SK-N-SH (cell line): ENCODE measurements at regions of chr11 and their contacts with region 1.

Region 1: GRCh38 chr11:117443266-117444195 is 115.9 kb downstream of the CEP164 start:
- DNase-seq: peak; percentile 92
- H3K4me3 ChIP-seq: peak overlapping the region; percentile 8 to 9; a peak in 2 of 4 replicates
- H3K27ac ChIP-seq: peak overlapping the region in 1 of 2 experiments; percentile 99; a peak in 2 of 4 replicates
- H3K4me1 ChIP-seq: peaks cover 0 to 29% of the 10 kb centered on the region in 2 experiments; a peak in 2 of 4 replicates
- H3K27me3 ChIP-seq: peaks cover 22% of the 10 kb centered on the region; the same call in 1 of the 2 replicates
- CTCF ChIP-seq: peak; percentile 65
- EP300 ChIP-seq: peak in 1 of 2 experiments; percentile 31; a peak in 1 of 4 replicates
- RAD21 ChIP-seq: peak; percentile 96

Region 2: DNA sequence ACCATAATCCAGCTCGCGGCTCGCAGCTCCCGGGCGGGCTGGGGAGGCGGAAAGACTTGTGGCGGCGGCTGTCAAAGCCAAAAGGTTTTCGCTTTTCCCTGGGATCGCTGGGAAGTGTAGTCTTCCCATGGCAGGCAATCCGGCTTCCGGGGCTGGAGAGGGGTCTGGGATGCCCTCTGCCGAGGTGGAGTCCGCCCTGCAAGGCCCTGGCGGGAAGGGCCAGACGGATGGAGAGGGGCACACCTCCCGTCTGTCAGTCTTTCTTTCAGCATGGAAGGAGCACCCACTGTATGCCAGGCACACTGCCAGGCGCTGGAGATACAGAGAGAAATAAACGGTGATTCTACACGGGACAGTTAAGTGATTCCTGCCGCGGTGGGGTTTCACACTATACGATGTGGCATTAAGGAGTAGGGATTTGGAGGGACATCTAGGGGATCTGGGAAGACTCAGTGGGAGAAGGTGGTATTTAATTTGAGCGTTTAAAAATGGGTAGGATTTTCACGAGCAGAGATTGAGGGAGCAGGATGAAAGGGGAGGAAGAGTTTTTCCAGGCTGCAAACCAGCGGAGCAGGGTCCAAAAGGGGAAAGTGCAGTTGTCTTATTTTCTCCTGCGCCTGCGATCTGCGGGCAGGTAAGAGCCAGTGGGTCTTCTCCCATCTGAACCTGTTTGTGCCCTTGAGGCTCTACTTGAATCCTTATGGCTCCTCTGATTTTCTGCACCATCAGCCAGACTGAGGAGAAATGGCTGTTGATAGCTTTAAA is 127.2 kb before region 1 on chr11 and contains the start of gene BACE1:
- CTCF ChIA-PET with region 1: no interaction called
- POLR2A ChIA-PET with region 1: no interaction called
- DNase-seq: peak; percentile 96
- H3K4me3 ChIP-seq: peak within 1 kb of the TSS; percentile 66 to 81
- H3K27ac ChIP-seq: peak within 1 kb of the TSS in 1 of 2 experiments; percentile 25; a peak in 2 of 4 replicates
- H3K4me1 ChIP-seq: peaks cover 0 to 19% of the 10 kb centered on the region in 2 experiments; a peak in 3 of 4 replicates
- H3K27me3 ChIP-seq: no peaks in the 10 kb centered on the region
- CTCF ChIP-seq: peak; percentile 54
- EP300 ChIP-seq: no peak
- RAD21 ChIP-seq: peak; percentile 58
- polyA plus RNA-seq, gene BACE1: 36.4 and 37.8 TPM in 2 replicates

Region 3: DNA sequence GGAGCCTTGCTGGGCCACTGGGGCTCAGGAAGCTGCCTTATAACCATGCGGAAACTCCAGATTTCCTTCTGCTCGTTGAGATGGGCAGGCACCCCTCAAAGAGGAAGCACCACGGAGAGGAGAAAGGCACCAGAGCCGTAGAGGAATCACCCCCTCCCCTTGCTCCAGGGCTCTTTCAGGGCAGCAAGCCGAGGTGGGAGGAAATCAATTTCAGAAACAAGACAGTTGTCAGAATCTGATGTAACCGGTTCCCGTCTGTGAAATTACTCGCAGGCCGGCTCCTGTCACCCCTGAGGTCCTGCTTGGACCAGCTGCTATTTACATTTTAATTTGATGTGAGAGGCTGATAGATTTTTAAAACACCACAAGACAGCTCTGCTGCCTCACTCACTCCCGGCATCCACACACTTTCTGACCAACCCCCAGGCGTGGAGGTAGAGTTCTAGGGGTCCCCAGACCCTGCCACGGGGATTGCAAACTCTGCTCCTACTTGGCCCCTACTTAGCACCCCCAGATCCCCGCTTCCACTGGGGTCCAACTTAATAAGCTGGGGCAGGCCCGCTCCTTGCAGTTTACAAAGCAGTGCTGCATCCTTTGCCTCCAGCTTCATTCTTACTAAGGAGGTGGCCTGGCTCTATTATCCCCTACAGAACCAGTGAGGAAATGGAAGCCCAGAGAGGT is 46.6 kb after region 1 on chr11:
- CTCF ChIA-PET with region 1: interaction called, 24 read pairs
- POLR2A ChIA-PET with region 1: interaction called, 28 read pairs
- DNase-seq: peak; percentile 75
- H3K4me3 ChIP-seq: no peak overlapping the region; a peak in 1 of 4 replicates
- H3K27ac ChIP-seq: peak overlapping the region in 1 of 2 experiments; percentile 98; a peak in 2 of 4 replicates
- H3K4me1 ChIP-seq: peaks cover 0 to 74% of the 10 kb centered on the region in 2 experiments; a peak in 1 of 4 replicates
- H3K27me3 ChIP-seq: no peaks in the 10 kb centered on the region; the same call in 1 of the 2 replicates
- CTCF ChIP-seq: no peak
- EP300 ChIP-seq: peak in 1 of 2 experiments; percentile 89; a peak in 2 of 4 replicates
- RAD21 ChIP-seq: no peak

Region 4: DNA sequence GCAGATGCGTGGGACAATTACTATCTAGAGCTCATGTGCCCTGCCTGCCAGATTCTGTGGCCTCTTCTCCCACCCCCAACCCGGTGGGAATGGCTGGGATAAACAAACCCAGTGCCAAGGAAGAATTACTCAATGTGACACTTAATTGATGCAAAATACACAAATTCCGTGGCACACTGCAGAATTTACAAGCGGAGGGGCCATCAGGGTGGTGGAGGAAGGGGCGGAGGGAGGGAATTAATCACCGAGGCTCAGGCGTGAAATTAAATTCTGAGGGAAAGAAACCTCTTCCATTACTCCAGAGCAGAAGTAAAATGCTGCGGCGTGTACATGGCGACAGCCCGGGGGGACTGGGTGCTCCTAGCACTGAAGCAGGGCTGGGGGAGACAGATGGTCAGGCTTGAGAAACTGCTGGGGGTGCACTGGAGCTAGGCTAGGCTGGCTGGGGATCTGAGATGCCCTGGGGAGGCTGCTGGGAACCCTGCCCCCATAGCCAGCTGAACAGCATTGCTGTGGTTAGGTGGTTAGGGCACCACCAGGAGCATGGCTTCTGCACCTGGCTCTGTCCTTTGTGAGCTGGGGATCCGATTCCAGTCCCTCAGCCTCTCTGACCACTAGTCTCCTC is 84.7 kb after region 1 on chr11:
- CTCF ChIA-PET with region 1: interaction called, 23 read pairs
- POLR2A ChIA-PET with region 1: interaction called, 3 read pairs
- DNase-seq: peak; percentile 52
- H3K4me3 ChIP-seq: no peak overlapping the region
- H3K27ac ChIP-seq: no peak overlapping the region
- H3K4me1 ChIP-seq: peaks cover 0 to 32% of the 10 kb centered on the region in 2 experiments; a peak in 2 of 4 replicates
- H3K27me3 ChIP-seq: no peaks in the 10 kb centered on the region; the same call in 1 of the 2 replicates
- CTCF ChIP-seq: no peak
- EP300 ChIP-seq: no peak
- RAD21 ChIP-seq: no peak

Region 5: DNA sequence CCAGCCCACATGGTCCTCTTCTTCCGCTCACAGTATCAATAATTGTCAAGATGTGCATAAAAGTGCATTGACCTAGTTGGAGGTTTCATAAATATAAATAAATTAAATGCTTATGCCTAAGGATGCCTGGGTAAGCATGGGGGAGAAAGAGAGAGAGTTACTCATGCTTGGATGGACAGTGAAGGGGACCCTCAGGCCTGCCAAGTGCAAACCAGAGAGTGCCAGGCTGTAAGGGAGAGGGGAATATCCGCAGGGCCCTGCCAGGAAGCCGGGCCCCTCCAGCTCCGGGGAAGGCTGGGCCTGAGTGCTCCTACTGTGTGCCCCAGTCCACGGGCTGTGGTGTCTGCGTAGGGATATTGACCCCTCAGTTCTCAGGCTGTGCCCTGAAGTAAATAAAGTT is 138.9 kb after region 1 on chr11:
- CTCF ChIA-PET with region 1: interaction called, 12 read pairs
- POLR2A ChIA-PET with region 1: interaction called, 3 read pairs
- DNase-seq: no peak
- H3K4me3 ChIP-seq: no peak overlapping the region
- H3K27ac ChIP-seq: no peak overlapping the region
- H3K4me1 ChIP-seq: peaks cover 4 to 6% of the 10 kb centered on the region in 2 experiments; a peak in 1 of 4 replicates
- H3K27me3 ChIP-seq: peaks cover 4% of the 10 kb centered on the region; the same call in 1 of the 2 replicates
- CTCF ChIP-seq: no peak
- EP300 ChIP-seq: no peak
- RAD21 ChIP-seq: no peak

Region 6: GRCh38 chr11:117634756-117635603 is 191.4 kb after region 1 on chr11:
- CTCF ChIA-PET with region 1: interaction called, 17 read pairs
- POLR2A ChIA-PET with region 1: no interaction called
- DNase-seq: no peak
- H3K4me3 ChIP-seq: no peak overlapping the region
- H3K27ac ChIP-seq: no peak overlapping the region
- H3K4me1 ChIP-seq: no peaks in the 10 kb centered on the region; a peak in 1 of 4 replicates
- H3K27me3 ChIP-seq: no peaks in the 10 kb centered on the region
- CTCF ChIP-seq: no peak
- EP300 ChIP-seq: no peak
- RAD21 ChIP-seq: no peak

Region 7: GRCh38 chr11:117771197-117771596 is 327.7 kb after region 1 on chr11:
- CTCF ChIA-PET with region 1: interaction called, 15 read pairs
- POLR2A ChIA-PET with region 1: interaction called, 12 read pairs
- DNase-seq: no peak
- H3K4me3 ChIP-seq: no peak overlapping the region
- H3K27ac ChIP-seq: peak overlapping the region in 1 of 2 experiments; percentile 95; a peak in 1 of 4 replicates
- H3K4me1 ChIP-seq: peaks cover 0 to 31% of the 10 kb centered on the region in 2 experiments; a peak in 2 of 4 replicates
- H3K27me3 ChIP-seq: no peaks in the 10 kb centered on the region; the same call in 1 of the 2 replicates
- CTCF ChIP-seq: no peak
- EP300 ChIP-seq: no peak
- RAD21 ChIP-seq: no peak

Region 8: GRCh38 chr11:117817368-117818040 is 374.0 kb after region 1 on chr11:
- CTCF ChIA-PET with region 1: interaction called, 121 read pairs
- POLR2A ChIA-PET with region 1: interaction called, 4 read pairs
- DNase-seq: peak; percentile 83
- H3K4me3 ChIP-seq: peak overlapping the region in 1 of 2 experiments; percentile 33; a peak in 1 of 4 replicates
- H3K27ac ChIP-seq: no peak overlapping the region
- H3K4me1 ChIP-seq: peaks cover 8 to 28% of the 10 kb centered on the region in 2 experiments; a peak in 2 of 4 replicates
- H3K27me3 ChIP-seq: no peaks in the 10 kb centered on the region
- CTCF ChIP-seq: peak; percentile 98
- EP300 ChIP-seq: no peak
- RAD21 ChIP-seq: peak; percentile 92